Stomach (tissue), 19 donors: ENCODE measurements at regions of chr19 and their contacts with region 1.

Region 1: GRCh38 chr19:1672038-1672768 is 19.8 kb upstream of the TCF3 start:
- DNase-seq: peak in 1 of 2 donors; percentile 76
- H3K4me3 ChIP-seq: peak overlapping the region in 3 of 4 donors; percentile 10 to 38 (median 22)
- H3K27ac ChIP-seq: no peak overlapping the region
- H3K4me1 ChIP-seq: peaks cover 19 to 45% (median 43%) of the 10 kb centered on the region in 4 donors
- H3K27me3 ChIP-seq: peaks cover 14 to 100% (median 86%) of the 10 kb centered on the region in 3 donors
- CTCF ChIP-seq: peak in 5 of 7 experiments; percentile 63 to 93 (median 79)
- EP300 ChIP-seq: no peak
- POLR2A ChIP-seq: no peak

Region 2: GRCh38 chr19:1465191-1466016 is 206.8 kb before region 1 on chr19:
- intact Hi-C with region 1: no loop called
- DNase-seq: peak; percentile 50 to 81
- H3K4me3 ChIP-seq: peak overlapping the region in 2 of 4 donors; percentile 3 to 31
- H3K27ac ChIP-seq: no peak overlapping the region
- H3K4me1 ChIP-seq: peaks cover 43 to 53% (median 51%) of the 10 kb centered on the region in 4 donors
- H3K27me3 ChIP-seq: peaks cover 27 to 69% (median 52%) of the 10 kb centered on the region in 3 donors
- CTCF ChIP-seq: peak in 4 of 7 experiments; percentile 22 to 38 (median 28)
- EP300 ChIP-seq: no peak
- POLR2A ChIP-seq: no peak

Region 3: DNA sequence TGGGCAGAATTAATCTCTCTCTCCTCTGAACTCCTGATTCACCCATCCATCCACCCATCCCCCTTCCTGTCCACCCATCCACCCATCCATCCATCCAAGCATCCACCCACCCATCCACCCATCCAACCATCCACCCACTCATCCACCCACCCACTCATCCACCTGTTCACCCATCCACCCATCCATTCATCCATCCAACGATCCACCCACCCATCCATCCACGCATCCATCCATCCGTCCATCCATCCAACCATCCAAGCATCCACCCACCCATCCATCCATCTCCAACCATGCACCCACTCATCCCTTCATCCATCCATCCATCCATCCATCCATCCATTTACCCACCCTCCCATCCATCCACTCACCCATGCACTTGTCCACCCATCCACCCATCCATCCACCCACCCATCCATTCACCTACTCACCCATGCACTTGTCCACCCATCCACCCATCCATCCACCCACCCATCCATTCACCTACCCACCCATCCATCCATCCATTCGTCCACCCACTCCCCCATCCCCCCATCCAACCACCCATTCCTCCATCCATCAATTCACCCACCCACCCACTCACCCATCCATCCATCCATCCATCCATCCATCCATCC is 122.8 kb before region 1 on chr19:
- intact Hi-C with region 1: loop called (anchors 5 kb)
- DNase-seq: no peak
- H3K4me3 ChIP-seq: no peak overlapping the region
- H3K27ac ChIP-seq: no peak overlapping the region
- H3K4me1 ChIP-seq: peaks cover 0 to 8% (median 5%) of the 10 kb centered on the region in 4 donors
- H3K27me3 ChIP-seq: peaks cover 0 to 24% (median 22%) of the 10 kb centered on the region in 3 donors
- CTCF ChIP-seq: no peak
- EP300 ChIP-seq: no peak
- POLR2A ChIP-seq: no peak

Region 4: GRCh38 chr19:1568320-1569019 is 103.7 kb before region 1 on chr19 and contains the start of gene MEX3D:
- intact Hi-C with region 1: no loop called
- DNase-seq: peak; percentile 87 to 93
- H3K4me3 ChIP-seq: peak within 1 kb of the TSS; percentile 65 to 76 (median 74)
- H3K27ac ChIP-seq: peak within 1 kb of the TSS; percentile 86 to 93 (median 87)
- H3K4me1 ChIP-seq: peaks cover 11 to 29% (median 23%) of the 10 kb centered on the region in 4 donors
- H3K27me3 ChIP-seq: peaks cover 0 to 17% (median 0%) of the 10 kb centered on the region in 3 donors
- CTCF ChIP-seq: no peak
- EP300 ChIP-seq: no peak
- POLR2A ChIP-seq: no peak
- total RNA-seq, gene MEX3D: 9.4 to 90.4 (median 20.1) TPM

Region 5: GRCh38 chr19:2027361-2027760 is 355.2 kb after region 1 on chr19:
- intact Hi-C with region 1: no loop called
- DNase-seq: peak in 1 of 2 donors; percentile 19
- H3K4me3 ChIP-seq: no peak overlapping the region
- H3K27ac ChIP-seq: peak overlapping the region in 2 of 5 donors; percentile 2 to 38
- H3K4me1 ChIP-seq: peaks cover 11 to 44% (median 30%) of the 10 kb centered on the region in 4 donors
- H3K27me3 ChIP-seq: no peaks in the 10 kb centered on the region
- CTCF ChIP-seq: peak in 1 of 7 experiments; percentile 17
- EP300 ChIP-seq: no peak
- POLR2A ChIP-seq: no peak